ENCODE measurements at regions of chr16 and their contacts with region 1.

Region 1: GRCh38 chr16:30844671-30845449 is 49.0 kb downstream of the BCL7C start:
- DNase-seq: peak; percentile 94
- H3K4me3 ChIP-seq: peak overlapping the region; percentile 21
- H3K27ac ChIP-seq: no peak overlapping the region
- H3K4me1 ChIP-seq: peaks cover 7% of the 10 kb centered on the region
- CTCF ChIP-seq: peak; percentile 98

Region 2: DNA sequence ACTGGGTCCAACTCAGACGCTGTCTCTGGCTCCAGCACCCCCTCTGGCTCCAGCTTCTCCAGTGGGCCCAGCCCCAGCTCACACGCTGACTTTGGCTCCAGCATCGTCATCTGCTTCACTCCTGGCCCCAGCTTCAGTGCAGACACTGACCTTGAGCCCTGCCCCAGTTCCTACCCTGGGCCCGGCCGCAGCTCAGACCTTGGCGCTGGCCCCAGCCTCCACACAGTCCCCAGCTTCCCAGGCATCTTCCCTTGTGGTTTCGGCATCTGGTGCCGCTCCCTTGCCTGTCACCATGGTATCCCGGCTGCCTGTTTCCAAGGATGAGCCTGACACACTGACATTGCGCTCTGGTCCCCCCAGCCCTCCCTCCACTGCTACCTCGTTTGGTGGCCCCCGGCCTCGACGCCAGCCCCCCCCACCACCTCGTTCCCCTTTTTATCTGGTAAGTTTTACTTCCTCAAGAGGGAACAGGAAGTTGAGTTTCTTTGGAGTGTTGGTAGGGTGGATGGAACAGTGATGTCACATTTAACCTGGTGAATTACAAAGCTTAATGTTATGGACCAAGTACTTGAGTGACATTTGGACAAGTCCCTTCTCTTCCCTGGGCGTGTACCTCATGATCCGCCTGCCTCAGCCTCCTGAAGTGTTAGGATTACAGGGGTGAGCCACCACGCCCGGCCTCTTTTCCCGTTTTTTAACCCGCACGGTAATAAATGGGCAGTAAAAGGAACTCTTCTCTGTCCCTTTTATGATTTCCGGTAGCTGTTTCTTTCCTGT is 120.0 kb before region 1 on chr16:
- CTCF ChIA-PET with region 1: no interaction called
- POLR2A ChIA-PET with region 1: no interaction called
- intact Hi-C with region 1: no loop called
- DNase-seq: no peak
- H3K4me3 ChIP-seq: no peak overlapping the region
- H3K27ac ChIP-seq: no peak overlapping the region
- H3K4me1 ChIP-seq: no peaks in the 10 kb centered on the region
- CTCF ChIP-seq: no peak

Region 3: GRCh38 chr16:30874821-30875717 is 30.2 kb after region 1 on chr16:
- CTCF ChIA-PET with region 1: no interaction called
- POLR2A ChIA-PET with region 1: interaction called, 4 read pairs
- intact Hi-C with region 1: loop called (anchors 1 kb)
- DNase-seq: peak; percentile 95
- H3K4me3 ChIP-seq: peak overlapping the region; percentile 89
- H3K27ac ChIP-seq: peak overlapping the region; percentile 78
- H3K4me1 ChIP-seq: peaks cover 34% of the 10 kb centered on the region
- CTCF ChIP-seq: 0 out of 2 replicates have a peak, but pooled peaks have one; percentile 27

Region 4: DNA sequence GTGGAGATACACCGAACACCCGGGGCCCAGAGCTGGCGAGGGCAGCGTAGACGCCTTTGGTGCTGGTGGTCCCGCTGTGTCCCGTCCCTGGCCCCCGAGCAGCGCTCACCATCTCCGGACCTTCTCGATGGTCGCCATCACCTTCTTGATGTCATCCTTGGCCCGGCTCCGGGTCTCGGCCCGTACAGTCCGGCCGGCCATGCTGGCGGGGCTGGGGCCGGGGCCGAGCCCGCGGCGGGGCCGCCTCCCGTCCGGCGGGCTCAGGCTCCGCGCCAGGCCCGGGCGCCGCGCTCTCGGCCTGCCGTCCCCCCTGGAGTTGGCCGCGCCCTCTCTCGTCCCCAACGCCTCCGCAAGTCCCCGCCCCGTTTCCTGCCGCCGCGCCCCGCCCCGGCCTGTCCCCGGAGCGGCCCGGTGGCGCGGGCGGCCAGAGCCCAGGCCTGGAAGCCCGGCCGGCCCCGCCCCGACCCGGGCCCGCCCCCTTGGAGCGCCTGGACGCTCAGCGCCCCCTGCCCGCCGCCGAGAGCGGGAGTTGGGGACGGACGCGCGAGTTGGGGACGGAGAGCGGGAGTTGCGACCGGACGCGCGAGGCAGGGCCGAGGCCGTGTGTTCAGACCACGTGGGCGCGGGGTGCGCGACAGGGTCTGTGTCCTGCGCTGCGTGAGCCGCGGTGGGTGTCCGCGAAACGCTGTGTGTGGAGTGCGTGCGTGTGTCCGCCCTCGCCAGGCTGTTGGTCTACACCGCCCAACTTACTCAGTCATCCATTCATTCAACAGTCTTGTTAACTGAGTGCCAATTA is 49.1 kb after region 1 on chr16 and contains the start of gene BCL7C:
- CTCF ChIA-PET with region 1: interaction called, 4 read pairs
- POLR2A ChIA-PET with region 1: interaction called, 9 read pairs
- intact Hi-C with region 1: loop called (anchors 5 kb)
- DNase-seq: peak; percentile 83
- H3K4me3 ChIP-seq: peak within 1 kb of the TSS; percentile 79
- H3K27ac ChIP-seq: peak within 1 kb of the TSS; percentile 50
- H3K4me1 ChIP-seq: peaks cover 46% of the 10 kb centered on the region
- CTCF ChIP-seq: peak; percentile 57
- total RNA-seq, gene BCL7C: 17.8 and 20.6 TPM in 2 replicates

Region 5: DNA sequence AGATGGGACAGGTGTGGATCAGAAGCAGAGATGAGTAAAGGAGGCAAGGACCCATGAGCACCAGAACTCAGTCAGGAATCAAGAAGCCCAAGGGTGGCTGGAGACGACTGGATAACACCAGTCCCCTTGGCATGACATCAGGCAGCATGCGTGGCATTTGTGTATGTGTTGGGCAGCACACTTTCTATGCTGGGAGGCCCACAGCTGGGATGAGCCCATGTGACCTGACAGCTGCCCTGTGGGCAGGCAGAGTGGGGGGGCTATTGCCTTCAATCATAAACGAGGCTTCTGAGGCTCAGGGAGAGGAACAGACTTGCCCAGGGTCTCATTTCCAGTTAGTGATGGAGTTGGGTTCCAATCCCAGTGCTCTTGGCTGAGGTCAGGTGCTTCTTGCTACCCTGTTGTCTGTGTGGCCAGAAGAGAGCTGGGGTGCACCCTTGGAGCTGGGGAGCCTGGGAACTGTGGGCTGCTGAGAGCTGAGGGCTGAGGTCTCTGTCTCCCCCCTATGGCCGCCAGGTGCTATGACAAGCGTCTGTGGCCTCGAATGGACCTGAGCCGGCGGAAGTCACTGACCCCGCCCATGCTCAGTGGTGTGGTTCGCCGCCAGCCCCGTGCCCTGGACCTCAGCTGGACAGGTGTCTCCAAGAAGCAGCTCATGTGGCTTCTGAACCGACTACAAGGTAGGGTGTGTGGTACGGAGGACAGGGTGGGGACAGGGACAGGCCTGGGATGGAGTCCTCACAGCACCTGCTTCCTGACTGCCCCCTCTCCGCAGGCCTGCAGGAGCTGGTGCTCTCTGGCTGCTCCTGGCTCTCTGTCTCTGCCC is 97.0 kb after region 1 on chr16:
- CTCF ChIA-PET with region 1: interaction called, 4 read pairs
- POLR2A ChIA-PET with region 1: no interaction called
- intact Hi-C with region 1: loop called (anchors 1 kb)
- DNase-seq: peak; percentile 74
- H3K4me3 ChIP-seq: no peak overlapping the region
- H3K27ac ChIP-seq: no peak overlapping the region
- H3K4me1 ChIP-seq: peaks cover 13% of the 10 kb centered on the region
- CTCF ChIP-seq: peak; percentile 92

Measured in OCI-LY7 (cell line).